Transverse colon (tissue), 4 donors: ENCODE measurements at regions of chr20 and their contacts with region 1.

Region 1: GRCh38 chr20:25437153-25437581 is 29.7 kb downstream of the GINS1 start:
- DNase-seq: no peak
- H3K4me3 ChIP-seq: no peak overlapping the region
- H3K27ac ChIP-seq: no peak overlapping the region
- H3K4me1 ChIP-seq: no peaks in the 10 kb centered on the region
- H3K27me3 ChIP-seq: no peaks in the 10 kb centered on the region
- CTCF ChIP-seq: no peak
- EP300 ChIP-seq: no peak
- POLR2A ChIP-seq: no peak

Region 2: GRCh38 chr20:25750765-25751696 is 313.9 kb after region 1 on chr20:
- in situ Hi-C with region 1: no loop called
- intact Hi-C with region 1: loop called (anchors 5 kb)
- DNase-seq: peak; percentile 65
- H3K4me3 ChIP-seq: peak overlapping the region; percentile 16 to 53 (median 36)
- H3K27ac ChIP-seq: peak overlapping the region; percentile 13 to 47 (median 40)
- H3K4me1 ChIP-seq: peaks cover 0 to 4% (median 2%) of the 10 kb centered on the region in 4 donors
- H3K27me3 ChIP-seq: no peaks in the 10 kb centered on the region
- CTCF ChIP-seq: no peak
- EP300 ChIP-seq: no peak
- POLR2A ChIP-seq: peak; percentile 27